ENCODE measurements at regions of chrX and their contacts with region 1.

Region 1: DNA sequence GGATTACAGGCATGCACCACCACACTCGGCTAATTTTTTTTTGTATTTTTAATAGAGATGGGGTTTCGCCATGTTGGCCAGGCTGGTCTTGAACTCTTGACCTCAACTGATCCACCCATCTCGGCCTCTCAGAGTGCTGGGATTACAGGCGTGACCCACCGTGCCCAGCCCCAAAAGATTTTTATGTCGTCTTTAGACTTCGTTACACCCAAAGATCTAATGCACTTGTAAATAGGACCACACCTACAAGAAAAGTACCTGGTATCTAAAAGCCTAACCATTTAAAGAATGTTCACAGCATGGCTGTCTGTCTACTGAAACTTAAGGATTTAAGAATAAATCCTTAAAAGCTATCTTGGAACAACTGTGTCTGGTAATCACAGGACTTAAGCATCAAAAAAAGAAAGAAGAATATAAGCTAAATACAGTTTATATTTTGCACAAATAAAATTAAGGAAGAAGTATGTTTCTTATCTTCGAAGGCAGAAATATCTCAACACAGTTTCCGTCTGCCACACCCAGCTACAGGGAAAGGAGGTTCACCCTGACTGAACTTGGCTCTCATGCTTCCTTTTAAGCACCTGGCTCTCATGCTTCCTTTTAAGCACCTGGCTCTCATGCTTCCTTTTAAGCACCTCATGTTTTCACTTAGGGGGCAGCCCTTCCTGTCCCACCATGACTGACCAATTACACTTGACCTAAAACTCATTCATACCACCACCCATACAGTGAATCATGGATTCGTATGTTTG is 92.0 kb upstream of the STS start:
- DNase-seq: no peak

Region 2: DNA sequence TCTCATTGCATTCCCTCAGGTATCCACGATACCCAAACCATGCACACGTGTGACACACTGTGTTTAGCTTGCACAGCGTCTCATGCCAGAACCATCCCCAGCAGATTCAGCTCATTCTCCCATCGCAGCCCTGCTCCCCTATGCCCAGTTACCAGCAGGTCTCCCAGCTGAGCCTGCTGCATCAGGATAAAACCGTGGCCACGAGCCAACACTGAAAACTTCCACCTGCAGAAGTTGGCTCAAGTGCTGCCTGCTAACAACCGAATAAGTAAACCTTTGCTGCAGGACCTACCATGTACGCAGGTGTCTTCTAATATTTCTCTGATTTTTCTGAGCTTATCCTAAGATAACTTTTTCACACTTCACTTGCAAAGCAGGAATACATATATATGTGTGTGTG is 28.5 kb before region 1 on chrX:
- intact Hi-C with region 1: loop called (anchors 2 kb)
- DNase-seq: no peak

Region 3: DNA sequence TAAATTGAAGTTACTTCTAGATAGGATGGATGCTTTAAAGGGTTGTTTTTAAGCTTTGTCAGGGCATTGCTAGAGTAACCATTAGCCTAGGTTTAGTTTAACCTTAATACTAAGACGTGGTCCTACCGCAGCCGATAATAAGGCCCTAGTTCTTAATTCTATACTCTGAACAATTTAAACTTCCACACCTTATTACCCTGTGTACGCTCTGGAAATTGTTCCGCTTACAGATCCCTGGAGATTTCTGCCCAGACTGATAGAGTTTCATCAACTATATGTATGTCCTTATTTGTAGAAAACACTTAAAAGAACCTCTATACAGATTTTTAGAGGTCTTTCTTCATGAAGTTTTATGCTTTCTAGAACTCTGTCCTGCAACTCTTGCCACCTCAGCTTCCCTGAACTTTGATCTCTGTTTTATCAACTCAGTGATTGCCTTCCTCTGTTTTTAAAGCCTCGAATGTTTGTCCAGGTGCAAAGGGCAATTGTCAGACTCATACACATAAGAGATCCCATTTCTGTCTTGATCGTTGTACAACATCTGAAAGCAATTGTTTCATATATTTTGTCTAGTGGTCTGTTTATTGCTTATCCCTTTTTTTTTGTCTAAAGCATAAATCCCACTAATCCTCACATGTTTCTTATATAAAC is 716.4 kb after region 1 on chrX:
- intact Hi-C with region 1: no loop called
- DNase-seq: no peak

Measured in cardiac septum (tissue), 1 donor.